ENCODE measurements at regions of chr7 and their contacts with region 1.

Region 1: DNA sequence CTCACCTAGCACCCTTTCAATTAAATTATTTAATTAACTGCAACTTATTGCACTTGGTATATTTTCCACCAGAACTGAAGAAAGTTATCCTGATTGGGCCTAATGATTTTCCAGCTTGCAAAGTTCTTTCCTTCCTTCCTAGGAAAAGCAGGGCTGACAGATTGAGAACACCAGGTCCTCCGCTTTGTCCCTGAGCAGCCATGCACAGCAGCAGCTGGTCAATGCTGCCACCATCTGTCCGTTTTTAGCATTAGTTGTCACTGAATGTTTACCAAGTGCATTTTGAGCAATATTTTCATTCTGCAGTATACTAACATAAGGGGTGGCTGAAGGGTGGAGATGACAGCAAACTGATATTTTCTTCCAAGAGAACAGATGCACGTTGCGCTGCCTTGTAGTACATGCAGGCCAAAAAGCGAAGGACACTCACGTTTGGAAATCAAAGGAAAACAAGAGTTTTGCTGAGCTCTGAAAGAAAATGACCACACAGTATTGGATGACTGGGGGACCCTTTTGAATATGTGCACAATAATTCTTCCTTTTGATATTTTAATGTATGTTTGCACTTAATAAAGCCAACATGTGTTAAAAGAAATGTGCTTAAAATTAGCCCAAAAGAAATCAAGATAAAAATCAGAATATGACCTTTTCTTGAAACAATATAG is 248.8 kb upstream of the PTN start:
- DNase-seq: no peak
- ATAC-seq: peak; percentile 89
- H3K4me3 ChIP-seq: no peak overlapping the region
- H3K27ac ChIP-seq: no peak overlapping the region
- H3K4me1 ChIP-seq: no peaks in the 10 kb centered on the region
- H3K27me3 ChIP-seq: no peaks in the 10 kb centered on the region
- CTCF ChIP-seq: peak; percentile 56 to 87 (median 58); a peak in 5 of 6 replicates
- EP300 ChIP-seq: 0 out of 4 replicates have a peak, but pooled peaks of 1 of the 2 experiments have one; percentile 22
- POLR2A ChIP-seq: no peak
- RAD21 ChIP-seq: peak; percentile 87

Region 2: GRCh38 chr7:136405931-136406777 is 1186.2 kb before region 1 on chr7:
- CTCF ChIA-PET with region 1: no interaction called
- POLR2A ChIA-PET with region 1: no interaction called
- RAD21 ChIA-PET with region 1: no interaction called
- SMC1A ChIA-PET with region 1: no interaction called
- in situ Hi-C with region 1: loop called (anchors 10 kb)
- intact Hi-C with region 1: loop called (anchors 5 kb)
- DNase-seq: no peak
- ATAC-seq: peak; percentile 98
- H3K4me3 ChIP-seq: no peak overlapping the region
- H3K27ac ChIP-seq: no peak overlapping the region
- H3K4me1 ChIP-seq: no peaks in the 10 kb centered on the region
- H3K27me3 ChIP-seq: no peaks in the 10 kb centered on the region
- CTCF ChIP-seq: peak; percentile 56 to 84 (median 81)
- EP300 ChIP-seq: no peak
- POLR2A ChIP-seq: no peak
- RAD21 ChIP-seq: peak; percentile 56

Region 3: DNA sequence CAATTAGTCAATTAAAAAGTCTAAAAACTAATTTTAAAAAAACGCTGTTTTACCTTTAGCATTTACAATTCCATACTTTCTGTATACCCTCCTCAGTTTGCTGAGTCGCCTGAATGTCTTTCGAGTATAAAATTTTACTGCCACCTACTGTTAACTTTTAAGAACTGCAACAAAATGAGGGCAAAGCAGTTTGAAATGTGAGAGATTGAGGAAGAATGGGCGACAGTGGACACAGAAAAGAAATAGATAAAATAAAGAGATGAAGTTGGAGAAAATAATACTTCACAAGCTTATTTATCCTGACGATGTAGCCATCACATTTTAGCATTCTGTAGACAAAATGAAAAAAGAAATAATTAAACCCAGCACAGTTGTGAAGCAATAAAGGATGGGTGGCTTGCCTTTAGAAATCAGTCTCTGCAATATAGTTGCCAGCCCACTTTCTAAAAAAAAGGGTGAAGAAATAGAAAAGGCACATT is 138.1 kb before region 1 on chr7:
- CTCF ChIA-PET with region 1: interaction called, 13 read pairs
- POLR2A ChIA-PET with region 1: no interaction called
- RAD21 ChIA-PET with region 1: interaction called, 8 read pairs
- SMC1A ChIA-PET with region 1: interaction called, 11 read pairs
- in situ Hi-C with region 1: no loop called
- intact Hi-C with region 1: no loop called
- DNase-seq: no peak
- ATAC-seq: peak; percentile 82
- H3K4me3 ChIP-seq: no peak overlapping the region
- H3K27ac ChIP-seq: no peak overlapping the region
- H3K4me1 ChIP-seq: no peaks in the 10 kb centered on the region
- H3K27me3 ChIP-seq: no peaks in the 10 kb centered on the region
- CTCF ChIP-seq: peak; percentile 47 to 66 (median 53); a peak in 5 of 6 replicates
- EP300 ChIP-seq: no peak
- POLR2A ChIP-seq: no peak
- RAD21 ChIP-seq: peak; percentile 76

Region 4: GRCh38 chr7:137579913-137580640 is 12.3 kb before region 1 on chr7:
- CTCF ChIA-PET with region 1: interaction called, 51 read pairs
- POLR2A ChIA-PET with region 1: no interaction called
- RAD21 ChIA-PET with region 1: interaction called, 4 read pairs
- SMC1A ChIA-PET with region 1: interaction called, 23 read pairs
- in situ Hi-C with region 1: no loop called
- intact Hi-C with region 1: no loop called
- DNase-seq: no peak
- ATAC-seq: peak; percentile 72
- H3K4me3 ChIP-seq: no peak overlapping the region
- H3K27ac ChIP-seq: no peak overlapping the region
- H3K4me1 ChIP-seq: no peaks in the 10 kb centered on the region
- H3K27me3 ChIP-seq: no peaks in the 10 kb centered on the region
- CTCF ChIP-seq: no peak
- EP300 ChIP-seq: no peak
- POLR2A ChIP-seq: no peak
- RAD21 ChIP-seq: no peak

Region 5: GRCh38 chr7:137820677-137821420 is 228.5 kb after region 1 on chr7:
- CTCF ChIA-PET with region 1: no interaction called
- POLR2A ChIA-PET with region 1: no interaction called
- RAD21 ChIA-PET with region 1: no interaction called
- SMC1A ChIA-PET with region 1: no interaction called
- in situ Hi-C with region 1: no loop called
- intact Hi-C with region 1: no loop called
- DNase-seq: no peak
- ATAC-seq: peak; percentile 91
- H3K4me3 ChIP-seq: no peak overlapping the region
- H3K27ac ChIP-seq: no peak overlapping the region
- H3K4me1 ChIP-seq: peaks cover 6% of the 10 kb centered on the region
- H3K27me3 ChIP-seq: no peaks in the 10 kb centered on the region
- CTCF ChIP-seq: no peak
- EP300 ChIP-seq: no peak; a peak in 1 of 4 replicates
- POLR2A ChIP-seq: no peak
- RAD21 ChIP-seq: no peak

Region 6: DNA sequence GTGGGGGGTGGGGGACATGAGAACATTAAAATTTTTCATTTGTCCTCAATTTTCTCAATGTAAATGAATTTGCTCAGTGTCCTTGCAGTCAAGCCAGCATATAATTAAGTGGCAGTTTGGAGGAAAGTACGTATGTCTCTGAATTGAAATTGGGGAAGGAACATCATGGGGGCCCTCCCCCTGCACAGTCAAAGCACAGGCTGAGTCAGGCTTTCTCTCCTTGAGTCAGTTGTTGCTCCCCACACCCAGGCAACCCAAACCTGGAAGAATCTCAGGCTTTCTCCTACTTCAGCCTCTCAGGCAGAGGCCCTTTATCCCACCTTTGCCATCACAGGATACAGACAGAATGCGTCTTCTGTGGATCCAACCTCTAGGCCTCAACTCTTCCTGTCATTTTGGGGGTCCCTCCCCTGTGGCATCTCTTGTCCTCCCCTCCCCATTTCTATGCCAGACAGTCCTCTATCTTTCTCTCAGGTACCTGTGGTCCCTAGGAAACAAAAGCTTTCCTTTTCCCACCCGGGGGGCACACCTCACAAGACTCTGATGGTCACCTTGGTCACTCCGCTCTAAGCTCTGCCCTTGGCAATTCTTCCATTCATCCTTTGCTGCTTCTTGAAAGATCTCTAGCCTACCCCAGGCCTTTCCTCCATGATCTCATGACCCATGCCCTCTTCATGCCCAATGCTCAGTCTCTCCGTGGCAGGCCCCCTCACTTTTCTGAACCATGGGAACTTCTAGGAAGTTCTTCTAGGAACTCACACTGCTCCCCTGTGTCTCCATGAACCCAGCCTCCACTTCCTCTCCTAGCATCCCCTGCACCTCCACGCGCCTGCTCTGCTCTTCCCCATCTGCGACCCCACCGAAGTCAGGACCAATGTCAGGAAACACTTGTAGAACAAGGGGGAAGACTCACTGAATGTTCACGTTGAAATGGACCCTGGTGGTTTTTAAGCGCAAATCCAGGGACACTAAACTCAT is 369.1 kb after region 1 on chr7:
- CTCF ChIA-PET with region 1: no interaction called
- POLR2A ChIA-PET with region 1: no interaction called
- RAD21 ChIA-PET with region 1: no interaction called
- SMC1A ChIA-PET with region 1: no interaction called
- in situ Hi-C with region 1: no loop called
- intact Hi-C with region 1: no loop called
- DNase-seq: no peak
- ATAC-seq: peak; percentile 90
- H3K4me3 ChIP-seq: no peak overlapping the region
- H3K27ac ChIP-seq: peak overlapping the region; percentile 14
- H3K4me1 ChIP-seq: peaks cover 30% of the 10 kb centered on the region
- H3K27me3 ChIP-seq: no peaks in the 10 kb centered on the region
- CTCF ChIP-seq: no peak
- EP300 ChIP-seq: no peak
- POLR2A ChIP-seq: no peak
- RAD21 ChIP-seq: no peak